K562 (cell line): ENCODE measurements at regions of chr1 and their contacts with region 1.

Region 1: GRCh38 chr1:180433876-180434275 is 68.5 kb downstream of the ACBD6 start:
- DNase-seq: no peak
- ATAC-seq: no peak
- H3K4me3 ChIP-seq: no peak overlapping the region
- H3K27ac ChIP-seq: no peak overlapping the region
- H3K4me1 ChIP-seq: no peaks in the 10 kb centered on the region
- H3K27me3 ChIP-seq: no peaks in the 10 kb centered on the region
- CTCF ChIP-seq: no peak
- EP300 ChIP-seq: no peak
- POLR2A ChIP-seq: no peak
- RAD21 ChIP-seq: no peak

Region 2: DNA sequence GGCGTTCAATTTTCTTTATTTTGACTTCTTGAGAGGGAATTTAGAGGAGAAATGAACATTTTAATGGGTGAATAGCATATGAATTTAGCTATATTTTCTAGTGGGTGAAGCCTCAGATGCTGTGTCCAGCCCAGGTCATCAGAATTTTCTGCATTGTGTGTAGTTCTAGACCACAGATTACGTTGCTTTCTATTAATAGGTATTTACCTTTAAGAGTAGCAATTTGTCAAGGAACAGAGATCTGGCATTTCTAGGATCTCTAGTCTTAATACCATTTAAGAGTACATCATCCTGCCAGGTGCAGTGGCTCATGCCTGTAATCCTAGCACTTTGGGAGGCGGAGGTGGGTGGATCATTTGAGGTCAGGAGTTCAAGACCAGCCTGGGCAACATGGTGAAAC is 821.5 kb before region 1 on chr1:
- CTCF ChIA-PET with region 1: no interaction called
- POLR2A ChIA-PET with region 1: no interaction called
- in situ Hi-C with region 1: no loop called
- intact Hi-C with region 1: loop called (anchors 5 kb)
- DNase-seq: no peak
- ATAC-seq: no peak
- H3K4me3 ChIP-seq: no peak overlapping the region
- H3K27ac ChIP-seq: no peak overlapping the region
- H3K4me1 ChIP-seq: no peaks in the 10 kb centered on the region
- H3K27me3 ChIP-seq: no peaks in the 10 kb centered on the region
- CTCF ChIP-seq: no peak
- EP300 ChIP-seq: no peak
- POLR2A ChIP-seq: no peak
- RAD21 ChIP-seq: no peak

Region 3: GRCh38 chr1:180020017-180020416 is 413.9 kb before region 1 on chr1:
- CTCF ChIA-PET with region 1: no interaction called
- POLR2A ChIA-PET with region 1: no interaction called
- in situ Hi-C with region 1: no loop called
- intact Hi-C with region 1: no loop called
- DNase-seq: no peak
- ATAC-seq: no peak
- H3K4me3 ChIP-seq: no peak overlapping the region
- H3K27ac ChIP-seq: no peak overlapping the region
- H3K4me1 ChIP-seq: no peaks in the 10 kb centered on the region
- H3K27me3 ChIP-seq: no peaks in the 10 kb centered on the region
- CTCF ChIP-seq: no peak
- EP300 ChIP-seq: no peak
- POLR2A ChIP-seq: no peak
- RAD21 ChIP-seq: no peak